ENCODE measurements at regions of chr4 and their contacts with region 1.

Region 1: DNA sequence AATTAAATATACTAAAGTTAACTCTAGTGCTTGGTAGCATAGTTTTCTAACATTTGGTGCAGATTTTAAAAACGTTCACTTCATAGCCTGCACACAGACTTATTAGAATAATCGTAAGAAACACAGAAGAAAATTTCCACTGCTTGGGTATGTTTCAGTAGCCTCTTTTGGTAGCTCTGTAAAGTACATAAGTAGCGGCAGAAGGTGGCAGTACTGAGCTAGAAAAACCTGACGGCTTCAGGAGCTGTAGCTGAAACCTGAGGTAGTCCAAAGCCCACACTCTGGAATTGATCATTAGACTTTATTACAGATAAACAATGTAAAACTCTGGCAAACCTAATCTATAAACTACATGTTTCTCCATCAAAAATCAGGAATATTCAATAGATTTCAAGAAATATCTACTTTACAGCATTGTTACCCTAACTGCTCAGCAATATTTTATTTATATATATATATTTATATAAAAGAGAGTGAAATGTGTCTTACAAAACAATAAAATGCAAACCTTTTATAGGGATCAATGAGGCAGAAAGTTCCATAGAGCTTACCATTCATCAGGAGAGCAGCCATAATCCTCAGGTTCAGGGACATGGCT is 88.2 kb downstream of the ATP8A1 start:
- DNase-seq: peak; percentile 37 to 61
- H3K4me3 ChIP-seq: no peak overlapping the region
- H3K27ac ChIP-seq: no peak overlapping the region
- H3K4me1 ChIP-seq: no peaks in the 10 kb centered on the region
- H3K27me3 ChIP-seq: no peaks in the 10 kb centered on the region
- CTCF ChIP-seq: peak; percentile 55 to 69 (median 64)
- POLR2A ChIP-seq: no peak

Region 2: GRCh38 chr4:42865572-42866189 is 297.0 kb after region 1 on chr4:
- intact Hi-C with region 1: loop called (anchors 10 kb)
- DNase-seq: peak; percentile 12 to 25
- H3K4me3 ChIP-seq: no peak overlapping the region
- H3K27ac ChIP-seq: no peak overlapping the region
- H3K4me1 ChIP-seq: no peaks in the 10 kb centered on the region
- H3K27me3 ChIP-seq: no peaks in the 10 kb centered on the region
- CTCF ChIP-seq: peak; percentile 50 to 56 (median 52)
- POLR2A ChIP-seq: no peak